ENCODE measurements at regions of chr15 and their contacts with region 1.

Region 1: GRCh38 chr15:57340682-57341259 is 35.5 kb upstream of the CGNL1 start:
- DNase-seq: peak in 3 of 5 donors; percentile 41 to 49 (median 49)
- ATAC-seq: peak in 3 of 4 donors; percentile 43 to 61 (median 61)
- H3K4me3 ChIP-seq: no peak overlapping the region
- H3K27ac ChIP-seq: no peak overlapping the region
- H3K4me1 ChIP-seq: peaks cover 0 to 24% (median 9%) of the 10 kb centered on the region in 12 donors
- H3K27me3 ChIP-seq: no peaks in the 10 kb centered on the region
- CTCF ChIP-seq: peak; percentile 79 to 98 (median 90)
- POLR2A ChIP-seq: no peak

Region 2: DNA sequence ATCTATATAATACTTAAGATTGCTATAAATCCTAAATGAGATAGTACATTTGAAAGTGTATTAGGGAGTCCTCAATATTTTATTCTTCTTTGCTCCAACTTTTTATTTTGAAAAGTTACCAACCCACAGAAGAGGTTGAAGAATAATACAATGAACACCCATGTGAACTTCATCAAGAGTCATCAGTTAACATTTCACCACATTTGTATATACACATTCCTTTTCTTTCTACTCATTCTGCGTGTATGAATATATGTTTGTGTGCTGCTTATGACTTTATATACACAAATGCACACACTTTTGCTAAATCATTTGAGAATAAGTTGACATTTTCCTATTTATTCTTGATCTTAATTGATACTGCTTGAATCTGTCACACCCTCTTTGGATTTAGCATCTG is 157.7 kb before region 1 on chr15:
- intact Hi-C with region 1: no loop called
- DNase-seq: no peak
- ATAC-seq: no peak
- H3K4me3 ChIP-seq: no peak overlapping the region
- H3K27ac ChIP-seq: peak overlapping the region in 3 of 12 donors; percentile 11 to 36 (median 13)
- H3K4me1 ChIP-seq: peaks cover 0 to 23% (median 13%) of the 10 kb centered on the region in 12 donors
- H3K27me3 ChIP-seq: no peaks in the 10 kb centered on the region
- CTCF ChIP-seq: no peak
- POLR2A ChIP-seq: no peak

Region 3: GRCh38 chr15:57196865-57197264 is 143.9 kb before region 1 on chr15:
- intact Hi-C with region 1: no loop called
- DNase-seq: no peak
- ATAC-seq: peak in 1 of 4 donors; percentile 63
- H3K4me3 ChIP-seq: no peak overlapping the region
- H3K27ac ChIP-seq: no peak overlapping the region
- H3K4me1 ChIP-seq: peaks cover 0 to 26% (median 13%) of the 10 kb centered on the region in 12 donors
- H3K27me3 ChIP-seq: no peaks in the 10 kb centered on the region
- CTCF ChIP-seq: no peak
- POLR2A ChIP-seq: no peak

Region 4: DNA sequence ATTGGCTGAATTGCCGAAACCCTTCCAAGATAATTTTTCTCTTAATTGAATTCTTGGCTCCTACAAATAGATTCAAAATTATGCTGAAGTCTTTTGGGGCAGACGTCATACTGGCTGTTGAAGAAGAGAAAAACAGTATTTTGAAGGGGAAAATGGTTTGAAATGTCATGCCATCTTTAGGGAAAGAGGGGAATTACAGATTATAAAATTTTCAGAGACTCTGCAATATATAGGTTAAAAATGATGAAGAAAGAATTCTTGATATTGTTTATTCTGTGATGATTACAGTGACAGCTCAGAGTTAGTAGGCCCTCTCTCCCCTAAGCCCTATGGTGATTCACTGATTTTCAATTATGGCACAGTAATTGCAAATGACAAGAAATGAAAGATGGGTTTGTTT is 121.6 kb after region 1 on chr15:
- intact Hi-C with region 1: loop called in 3 of 10 experiments (anchors 5 kb)
- DNase-seq: no peak
- ATAC-seq: no peak
- H3K4me3 ChIP-seq: no peak overlapping the region
- H3K27ac ChIP-seq: no peak overlapping the region
- H3K4me1 ChIP-seq: peaks cover 0 to 17% (median 2%) of the 10 kb centered on the region in 12 donors
- H3K27me3 ChIP-seq: no peaks in the 10 kb centered on the region
- CTCF ChIP-seq: peak in 7 of 12 donors; percentile 7 to 40 (median 36)
- POLR2A ChIP-seq: no peak

Region 5: DNA sequence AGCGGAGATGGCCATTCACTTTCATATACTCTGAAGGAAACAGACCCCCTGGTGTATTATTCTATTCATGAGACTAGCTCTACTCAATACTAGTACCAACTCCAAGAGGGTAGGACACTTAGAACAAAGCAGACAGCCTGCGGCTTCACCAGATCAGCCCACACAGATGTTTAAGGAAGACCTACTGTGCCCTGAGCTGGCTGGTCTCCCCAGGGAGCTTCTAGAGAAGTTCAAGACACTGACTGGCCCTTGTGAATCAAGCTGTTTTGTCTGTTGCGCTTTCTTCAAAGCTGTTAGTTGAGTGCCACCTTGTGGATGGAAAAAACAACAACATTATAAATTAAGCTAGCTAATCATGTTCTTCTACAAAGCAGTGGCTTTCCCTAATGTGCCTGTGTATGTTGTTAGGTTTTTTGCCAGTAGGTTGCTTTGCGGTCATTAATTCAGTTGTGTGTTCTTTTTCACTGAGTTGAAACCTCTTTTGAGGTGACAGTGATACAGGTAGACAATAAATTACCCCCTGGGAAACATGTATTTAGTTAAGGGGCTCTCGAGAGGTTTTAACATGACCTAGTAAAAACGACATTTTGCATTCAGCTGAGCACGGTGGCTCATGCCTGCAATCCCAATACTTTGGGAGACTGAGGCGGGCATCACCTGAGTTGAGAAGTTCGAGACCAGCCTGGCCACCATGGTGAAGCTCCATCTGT is 186.8 kb after region 1 on chr15:
- intact Hi-C with region 1: loop called (anchors 1 to 2 kb)
- DNase-seq: peak in 2 of 5 donors; percentile 51 to 55
- ATAC-seq: peak in 3 of 4 donors; percentile 67 to 76 (median 76)
- H3K4me3 ChIP-seq: no peak overlapping the region
- H3K27ac ChIP-seq: no peak overlapping the region
- H3K4me1 ChIP-seq: peaks cover 0 to 14% (median 3%) of the 10 kb centered on the region in 12 donors
- H3K27me3 ChIP-seq: no peaks in the 10 kb centered on the region
- CTCF ChIP-seq: peak; percentile 49 to 80 (median 66)
- POLR2A ChIP-seq: no peak

Region 6: GRCh38 chr15:57541805-57542504 is 201.2 kb after region 1 on chr15:
- intact Hi-C with region 1: loop called in 2 of 10 experiments (anchors 5 kb)
- DNase-seq: peak; percentile 63 to 72 (median 66)
- ATAC-seq: peak in 3 of 4 donors; percentile 20 to 50 (median 43)
- H3K4me3 ChIP-seq: no peak overlapping the region
- H3K27ac ChIP-seq: no peak overlapping the region
- H3K4me1 ChIP-seq: peaks cover 0 to 6% (median 0%) of the 10 kb centered on the region in 12 donors
- H3K27me3 ChIP-seq: no peaks in the 10 kb centered on the region
- CTCF ChIP-seq: peak; percentile 60 to 89 (median 80)
- POLR2A ChIP-seq: no peak

Measured in heart left ventricle (tissue), 16 donors.